A673 (cell line): ENCODE measurements at regions of chr20 and their contacts with region 1.

Region 1: GRCh38 chr20:53578492-53579222 is 15.0 kb downstream of the ZNF217 start:
- DNase-seq: peak; percentile 94
- H3K4me3 ChIP-seq: peak overlapping the region; percentile 16
- H3K27ac ChIP-seq: peak overlapping the region; percentile 79
- H3K4me1 ChIP-seq: peaks cover 50% of the 10 kb centered on the region
- H3K27me3 ChIP-seq: no peaks in the 10 kb centered on the region
- CTCF ChIP-seq: peak; percentile 85

Region 2: GRCh38 chr20:53869466-53870258 is 291.0 kb after region 1 on chr20:
- CTCF ChIA-PET with region 1: interaction called, 7 read pairs
- POLR2A ChIA-PET with region 1: no interaction called
- intact Hi-C with region 1: loop called (anchors 2 kb)
- DNase-seq: peak; percentile 84
- H3K4me3 ChIP-seq: no peak overlapping the region
- H3K27ac ChIP-seq: no peak overlapping the region
- H3K4me1 ChIP-seq: peaks cover 72% of the 10 kb centered on the region
- H3K27me3 ChIP-seq: no peaks in the 10 kb centered on the region
- CTCF ChIP-seq: peak; percentile 92

Region 3: GRCh38 chr20:54062812-54063280 is 484.2 kb after region 1 on chr20:
- CTCF ChIA-PET with region 1: interaction called, 3 read pairs
- POLR2A ChIA-PET with region 1: no interaction called
- intact Hi-C with region 1: loop called (anchors 5 kb)
- DNase-seq: peak; percentile 84
- H3K4me3 ChIP-seq: no peak overlapping the region
- H3K27ac ChIP-seq: no peak overlapping the region
- H3K4me1 ChIP-seq: peaks cover 33% of the 10 kb centered on the region
- H3K27me3 ChIP-seq: no peaks in the 10 kb centered on the region
- CTCF ChIP-seq: peak; percentile 76

Region 4: GRCh38 chr20:54199721-54200176 is 621.1 kb after region 1 on chr20:
- CTCF ChIA-PET with region 1: no interaction called
- POLR2A ChIA-PET with region 1: no interaction called
- intact Hi-C with region 1: loop called (anchors 10 kb)
- DNase-seq: peak; percentile 79
- H3K4me3 ChIP-seq: no peak overlapping the region
- H3K27ac ChIP-seq: no peak overlapping the region
- H3K4me1 ChIP-seq: no peaks in the 10 kb centered on the region
- H3K27me3 ChIP-seq: no peaks in the 10 kb centered on the region
- CTCF ChIP-seq: peak; percentile 93

Region 5: DNA sequence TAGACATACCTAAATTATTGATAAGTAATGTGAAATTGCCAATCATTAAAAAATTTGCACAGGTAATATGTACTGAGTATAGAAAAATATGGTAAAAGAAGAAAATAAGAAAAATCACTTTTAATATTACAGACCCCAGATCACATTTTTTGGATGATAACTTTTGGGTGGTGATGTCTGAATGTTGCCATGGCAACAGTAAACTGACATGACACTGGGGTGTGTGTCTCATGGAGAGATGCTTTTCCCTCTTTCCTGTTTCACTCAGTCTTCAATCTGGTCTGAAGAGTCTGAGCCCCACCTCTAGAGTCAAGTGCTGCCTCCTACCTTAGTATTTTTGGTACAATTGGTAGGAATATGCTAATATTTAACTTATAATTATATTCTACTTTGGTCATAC is 1613.3 kb after region 1 on chr20:
- CTCF ChIA-PET with region 1: no interaction called
- POLR2A ChIA-PET with region 1: no interaction called
- intact Hi-C with region 1: no loop called
- DNase-seq: no peak
- H3K4me3 ChIP-seq: no peak overlapping the region
- H3K27ac ChIP-seq: no peak overlapping the region
- H3K4me1 ChIP-seq: no peaks in the 10 kb centered on the region
- H3K27me3 ChIP-seq: no peaks in the 10 kb centered on the region
- CTCF ChIP-seq: no peak